Activated CD4-positive, alpha-beta T cell treated with anti-CD3 and anti-CD28 coated beads for 36 hours (primary cell): ENCODE measurements at regions of chr11 and their contacts with region 1.

Region 1: GRCh38 chr11:63888170-63889086 is 28.5 kb downstream of the RCOR2 start:
- DNase-seq: peak; percentile 83
- ATAC-seq: peak; percentile 88
- H3K4me3 Mint-ChIP-seq: peak overlapping the region; percentile 81
- H3K27ac Mint-ChIP-seq: peak overlapping the region; percentile 92
- H3K4me1 Mint-ChIP-seq: peaks cover 75% of the 10 kb centered on the region
- H3K27me3 Mint-ChIP-seq: no peaks in the 10 kb centered on the region

Region 2: GRCh38 chr11:63573881-63574855 is 314.3 kb before region 1 on chr11:
- CTCF ChIA-PET with region 1: no interaction called
- POLR2A ChIA-PET with region 1: no interaction called
- intact Hi-C with region 1: no loop called
- DNase-seq: peak; percentile 46
- ATAC-seq: peak; percentile 84
- H3K4me3 Mint-ChIP-seq: peak overlapping the region; percentile 56
- H3K27ac Mint-ChIP-seq: peak overlapping the region; percentile 79
- H3K4me1 Mint-ChIP-seq: peaks cover 16% of the 10 kb centered on the region
- H3K27me3 Mint-ChIP-seq: no peaks in the 10 kb centered on the region

Region 3: DNA sequence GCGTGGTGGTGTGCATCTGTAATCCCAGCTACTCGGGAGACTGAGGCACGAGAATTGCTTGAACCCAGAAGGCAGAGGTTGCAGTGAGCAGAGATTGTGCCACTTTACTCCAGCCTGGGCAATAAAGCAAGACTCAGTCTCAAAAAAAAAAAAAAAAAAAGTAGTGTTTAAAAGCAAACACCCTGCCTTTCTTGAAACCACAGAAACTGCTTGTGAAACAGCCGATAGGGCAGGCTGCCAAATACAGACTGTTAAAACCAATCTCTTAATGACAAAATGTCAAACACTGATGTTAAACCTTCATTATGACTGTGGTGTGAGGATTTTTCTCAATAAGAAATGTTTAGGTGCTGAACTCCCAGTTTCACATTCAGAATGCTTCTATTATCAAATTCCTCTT is 22.2 kb before region 1 on chr11:
- CTCF ChIA-PET with region 1: interaction called, 5 read pairs
- POLR2A ChIA-PET with region 1: interaction called, 3 read pairs
- intact Hi-C with region 1: loop called (anchors 1 to 2 kb)
- DNase-seq: peak; percentile 92
- ATAC-seq: peak; percentile 81
- H3K4me3 Mint-ChIP-seq: peak overlapping the region; percentile 28
- H3K27ac Mint-ChIP-seq: peak overlapping the region; percentile 62
- H3K4me1 Mint-ChIP-seq: peaks cover 79% of the 10 kb centered on the region
- H3K27me3 Mint-ChIP-seq: no peaks in the 10 kb centered on the region

Region 4: GRCh38 chr11:63916837-63917691 is 28.6 kb after region 1 on chr11 and contains the start of gene RCOR2:
- CTCF ChIA-PET with region 1: no interaction called
- POLR2A ChIA-PET with region 1: no interaction called
- intact Hi-C with region 1: loop called in 1 of 2 experiments (anchors 2 kb)
- DNase-seq: peak; percentile 81
- ATAC-seq: peak; percentile 68
- H3K4me3 Mint-ChIP-seq: peak within 1 kb of the TSS; percentile 70
- H3K27ac Mint-ChIP-seq: no peak within 1 kb of the TSS
- H3K4me1 Mint-ChIP-seq: peaks cover 12% of the 10 kb centered on the region
- H3K27me3 Mint-ChIP-seq: peaks cover 3% of the 10 kb centered on the region
- total RNA-seq, gene RCOR2: 0.37 TPM